ENCODE measurements at regions of chr15 and their contacts with region 1.

Region 1: DNA sequence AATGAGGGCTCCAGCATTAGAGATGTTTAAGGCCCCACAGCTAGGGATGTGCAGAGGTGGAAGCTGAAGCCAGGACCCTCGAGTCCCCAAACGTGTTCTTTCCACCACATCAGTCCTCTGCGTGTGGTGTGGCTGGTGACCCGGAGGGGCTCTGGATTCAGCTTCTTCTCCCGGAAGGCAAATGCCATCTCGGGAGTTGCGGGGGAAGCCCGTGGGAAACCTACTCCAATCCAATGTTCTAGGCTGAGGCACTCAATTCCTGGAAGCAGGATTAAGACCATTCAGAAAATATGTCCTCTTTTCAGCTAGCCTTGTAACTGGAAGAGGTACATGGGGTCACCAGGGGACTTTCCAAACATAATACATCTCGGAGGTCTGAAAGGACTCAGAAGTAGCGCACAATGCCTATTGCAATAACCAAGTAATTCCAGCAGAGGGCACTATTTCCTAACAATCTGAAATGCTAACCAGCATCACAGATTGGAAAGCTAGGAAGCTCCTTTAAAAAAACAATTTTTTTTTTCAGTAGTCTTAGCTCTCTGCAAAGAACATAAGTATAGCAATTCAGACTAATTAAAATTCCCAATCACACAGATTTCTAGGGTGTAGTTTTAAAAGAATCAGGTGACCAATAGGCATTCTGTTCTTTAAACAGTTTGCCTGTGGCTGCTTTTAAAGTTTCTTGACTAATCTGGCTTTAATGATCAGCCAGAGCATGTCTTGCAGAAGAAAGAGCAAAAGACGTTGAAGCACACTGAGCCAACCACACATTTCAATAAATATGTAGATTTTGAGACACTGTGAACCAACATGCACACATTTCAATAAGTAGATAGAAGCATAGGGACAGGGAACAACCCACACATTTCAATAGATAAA is 36.1 kb downstream of the BNC1 start:
- DNase-seq: peak; percentile 65
- H3K4me3 ChIP-seq: no peak overlapping the region
- H3K27ac ChIP-seq: no peak overlapping the region
- H3K4me1 ChIP-seq: no peaks in the 10 kb centered on the region
- CTCF ChIP-seq: peak; percentile 95

Region 2: GRCh38 chr15:83018436-83018835 is 230.0 kb before region 1 on chr15:
- CTCF ChIA-PET with region 1: no interaction called
- POLR2A ChIA-PET with region 1: no interaction called
- intact Hi-C with region 1: no loop called
- DNase-seq: no peak
- H3K4me3 ChIP-seq: no peak overlapping the region
- H3K27ac ChIP-seq: no peak overlapping the region
- H3K4me1 ChIP-seq: no peaks in the 10 kb centered on the region
- CTCF ChIP-seq: no peak

Region 3: DNA sequence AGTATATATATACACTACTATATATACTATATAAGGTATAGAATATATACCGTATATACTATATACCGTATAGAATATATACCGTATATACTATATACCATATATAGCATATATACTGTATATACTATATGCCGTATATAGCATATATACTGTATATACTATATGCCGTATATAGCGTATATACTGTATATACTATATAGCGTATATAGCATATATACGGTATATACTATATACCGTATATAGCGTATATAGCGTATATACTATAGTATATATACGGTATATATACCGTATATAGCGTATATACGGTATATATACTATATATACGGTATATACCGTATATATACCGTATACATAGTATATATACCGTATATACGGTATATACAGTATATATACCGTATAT is 18.1 kb before region 1 on chr15:
- CTCF ChIA-PET with region 1: no interaction called
- POLR2A ChIA-PET with region 1: no interaction called
- intact Hi-C with region 1: no loop called
- DNase-seq: no peak
- H3K4me3 ChIP-seq: no peak overlapping the region
- H3K27ac ChIP-seq: no peak overlapping the region
- H3K4me1 ChIP-seq: no peaks in the 10 kb centered on the region
- CTCF ChIP-seq: no peak

Region 4: DNA sequence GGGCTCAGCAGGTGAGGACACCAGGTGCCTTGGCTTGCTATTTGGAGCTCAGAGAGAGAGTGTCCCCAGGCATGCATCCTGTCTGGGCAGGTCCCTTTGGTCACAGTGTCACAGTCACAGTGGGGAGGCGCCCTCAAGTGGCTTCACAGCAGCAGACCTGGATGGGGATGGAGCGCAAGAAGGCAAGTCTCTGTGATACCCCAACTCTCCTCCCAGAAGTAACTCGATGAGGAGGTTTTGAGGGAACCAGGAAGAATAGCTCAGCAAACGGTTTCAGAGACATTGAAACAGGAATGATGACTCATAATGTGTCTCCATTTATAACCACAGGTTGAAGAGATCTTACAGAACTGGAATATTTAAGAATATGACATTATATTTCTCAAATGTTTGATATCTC is 132.3 kb after region 1 on chr15:
- CTCF ChIA-PET with region 1: no interaction called
- POLR2A ChIA-PET with region 1: no interaction called
- intact Hi-C with region 1: loop called (anchors 2 kb)
- DNase-seq: peak; percentile 51
- H3K4me3 ChIP-seq: no peak overlapping the region
- H3K27ac ChIP-seq: no peak overlapping the region
- H3K4me1 ChIP-seq: no peaks in the 10 kb centered on the region
- CTCF ChIP-seq: peak; percentile 72

Region 5: GRCh38 chr15:83436458-83437158 is 188.2 kb after region 1 on chr15:
- CTCF ChIA-PET with region 1: interaction called, 4 read pairs
- POLR2A ChIA-PET with region 1: no interaction called
- intact Hi-C with region 1: loop called (anchors 2 kb)
- DNase-seq: peak; percentile 2
- H3K4me3 ChIP-seq: no peak overlapping the region
- H3K27ac ChIP-seq: no peak overlapping the region
- H3K4me1 ChIP-seq: no peaks in the 10 kb centered on the region
- CTCF ChIP-seq: peak; percentile 68

Region 6: DNA sequence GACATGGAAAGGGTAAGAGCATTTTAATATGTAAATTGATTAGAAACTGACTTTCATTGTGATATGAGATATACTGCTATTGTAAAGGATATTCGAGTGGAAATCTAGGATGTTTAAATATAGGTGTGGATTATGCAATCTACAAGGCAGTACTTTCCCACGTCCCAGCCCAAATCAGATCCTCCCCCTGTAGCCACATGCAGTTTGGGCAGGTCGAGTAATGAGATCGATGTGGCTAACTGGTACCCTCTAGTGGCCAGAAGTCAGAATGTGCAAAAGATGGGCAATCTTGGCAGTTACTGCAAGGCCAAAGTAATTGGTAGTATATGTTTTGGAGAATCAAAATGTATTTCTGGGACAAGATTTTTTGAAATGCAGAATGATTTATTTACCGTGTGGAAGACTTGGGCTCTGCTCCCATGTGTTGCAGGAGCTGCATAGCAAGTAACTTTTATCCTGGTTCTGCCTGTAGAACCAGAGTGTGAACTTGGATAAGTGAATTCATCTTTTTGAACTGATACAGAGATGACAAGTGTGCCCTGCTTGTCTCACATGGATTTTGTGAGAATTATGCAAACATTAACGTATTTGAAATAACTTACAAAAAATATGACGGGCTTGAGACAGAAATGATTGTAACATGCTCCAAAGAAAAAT is 311.0 kb after region 1 on chr15:
- CTCF ChIA-PET with region 1: no interaction called
- POLR2A ChIA-PET with region 1: interaction called, 3 read pairs
- intact Hi-C with region 1: loop called (anchors 1 kb)
- DNase-seq: peak; percentile 58
- H3K4me3 ChIP-seq: no peak overlapping the region
- H3K27ac ChIP-seq: no peak overlapping the region
- H3K4me1 ChIP-seq: no peaks in the 10 kb centered on the region
- CTCF ChIP-seq: peak; percentile 91

Measured in OCI-LY7 (cell line).